ENCODE measurements at regions of chrX and their contacts with region 1.

Region 1: GRCh38 chrX:119693040-119693995 is at the start of gene SEPTIN6:
- DNase-seq: peak; percentile 78
- H3K4me3 Mint-ChIP-seq: peak within 1 kb of the TSS; percentile 93
- H3K27ac Mint-ChIP-seq: peak within 1 kb of the TSS; percentile 94
- H3K4me1 Mint-ChIP-seq: peaks cover 6% of the 10 kb centered on the region
- H3K27me3 Mint-ChIP-seq: peaks cover 2% of the 10 kb centered on the region
- total RNA-seq, gene SEPTIN6: 159 and 172 TPM in 2 replicates

Region 2: GRCh38 chrX:119201570-119201969 is 491.7 kb before region 1 on chrX:
- intact Hi-C with region 1: no loop called
- DNase-seq: no peak
- H3K4me3 Mint-ChIP-seq: no peak overlapping the region
- H3K27ac Mint-ChIP-seq: no peak overlapping the region
- H3K4me1 Mint-ChIP-seq: no peaks in the 10 kb centered on the region
- H3K27me3 Mint-ChIP-seq: peaks cover 2% of the 10 kb centered on the region

Region 3: DNA sequence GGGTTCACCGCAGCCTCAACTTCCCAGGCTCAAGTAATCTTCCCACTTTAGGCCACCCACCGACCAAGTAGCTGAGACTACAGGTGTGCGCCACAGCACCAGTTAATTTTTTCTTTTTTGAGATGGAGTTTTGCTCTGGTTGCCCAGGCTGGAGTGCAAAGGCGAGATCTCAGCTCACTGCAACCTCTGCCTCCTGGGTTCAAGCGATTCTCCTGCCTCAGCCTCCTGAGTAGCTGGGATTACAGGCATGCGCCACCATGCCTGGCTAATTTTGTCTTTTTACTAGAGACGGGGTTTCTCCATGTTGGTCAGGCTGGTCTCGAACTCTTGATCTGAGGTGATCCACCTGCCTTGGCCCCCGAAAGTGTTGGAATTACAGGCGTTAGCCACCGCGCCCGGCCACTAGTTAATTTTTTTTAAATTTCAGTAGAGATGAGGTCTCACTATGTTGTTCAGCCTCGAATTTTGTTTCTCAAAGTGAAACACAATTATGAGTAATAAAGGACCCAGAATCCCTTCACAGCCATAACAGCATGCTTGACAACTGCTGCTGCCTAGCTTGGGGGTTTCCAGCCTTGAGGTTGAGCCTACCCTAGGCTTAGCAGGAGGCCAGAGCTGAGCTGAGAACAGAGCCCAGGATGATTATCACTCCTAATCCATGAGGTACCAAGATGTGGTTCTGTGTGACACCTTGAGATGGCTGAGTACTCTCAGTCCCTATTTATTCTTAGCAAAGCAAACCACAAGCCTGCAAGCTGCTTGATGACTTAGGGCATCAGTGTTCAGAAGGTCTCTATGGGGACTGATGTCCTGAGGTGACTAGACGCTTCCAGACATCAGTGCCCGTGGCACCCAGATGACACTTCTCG is 45.5 kb before region 1 on chrX:
- intact Hi-C with region 1: loop called (anchors 1 kb)
- DNase-seq: peak; percentile 62
- H3K4me3 Mint-ChIP-seq: peak overlapping the region; percentile 66
- H3K27ac Mint-ChIP-seq: peak overlapping the region; percentile 91
- H3K4me1 Mint-ChIP-seq: peaks cover 22% of the 10 kb centered on the region
- H3K27me3 Mint-ChIP-seq: no peaks in the 10 kb centered on the region

Region 4: GRCh38 chrX:119655125-119655524 is 38.2 kb before region 1 on chrX:
- intact Hi-C with region 1: loop called (anchors 1 kb)
- DNase-seq: peak; percentile 41
- H3K4me3 Mint-ChIP-seq: peak overlapping the region; percentile 65
- H3K27ac Mint-ChIP-seq: peak overlapping the region; percentile 96
- H3K4me1 Mint-ChIP-seq: peaks cover 36% of the 10 kb centered on the region
- H3K27me3 Mint-ChIP-seq: no peaks in the 10 kb centered on the region

Region 5: GRCh38 chrX:119833905-119834304 is 140.6 kb after region 1 on chrX:
- intact Hi-C with region 1: no loop called
- DNase-seq: no peak
- H3K4me3 Mint-ChIP-seq: no peak overlapping the region
- H3K27ac Mint-ChIP-seq: no peak overlapping the region
- H3K4me1 Mint-ChIP-seq: no peaks in the 10 kb centered on the region
- H3K27me3 Mint-ChIP-seq: peaks cover 1% of the 10 kb centered on the region

Measured in activated T-helper 1 cell treated with anti-CD3 and anti-CD28 coated beads, Interleukin-12 subunit alpha, Interleukin-12 subunit beta, Interleukin-2, Interleukin-4 antibody, amounts not matched to agents 30 ng/mL and 10 ng/mL and 1 ng/mL, durations not matched to agents 14 hours and 24 hours and 36 hours (primary cell).